Dendritic cell treated with granulocyte-macrophage colony-stimulating factor and Interleukin-4, amounts not matched to agents 40 ng/mL and 50 ng/mL, for 4 days (primary cell): ENCODE measurements at regions of chr11 and their contacts with region 1.

Region 1: DNA sequence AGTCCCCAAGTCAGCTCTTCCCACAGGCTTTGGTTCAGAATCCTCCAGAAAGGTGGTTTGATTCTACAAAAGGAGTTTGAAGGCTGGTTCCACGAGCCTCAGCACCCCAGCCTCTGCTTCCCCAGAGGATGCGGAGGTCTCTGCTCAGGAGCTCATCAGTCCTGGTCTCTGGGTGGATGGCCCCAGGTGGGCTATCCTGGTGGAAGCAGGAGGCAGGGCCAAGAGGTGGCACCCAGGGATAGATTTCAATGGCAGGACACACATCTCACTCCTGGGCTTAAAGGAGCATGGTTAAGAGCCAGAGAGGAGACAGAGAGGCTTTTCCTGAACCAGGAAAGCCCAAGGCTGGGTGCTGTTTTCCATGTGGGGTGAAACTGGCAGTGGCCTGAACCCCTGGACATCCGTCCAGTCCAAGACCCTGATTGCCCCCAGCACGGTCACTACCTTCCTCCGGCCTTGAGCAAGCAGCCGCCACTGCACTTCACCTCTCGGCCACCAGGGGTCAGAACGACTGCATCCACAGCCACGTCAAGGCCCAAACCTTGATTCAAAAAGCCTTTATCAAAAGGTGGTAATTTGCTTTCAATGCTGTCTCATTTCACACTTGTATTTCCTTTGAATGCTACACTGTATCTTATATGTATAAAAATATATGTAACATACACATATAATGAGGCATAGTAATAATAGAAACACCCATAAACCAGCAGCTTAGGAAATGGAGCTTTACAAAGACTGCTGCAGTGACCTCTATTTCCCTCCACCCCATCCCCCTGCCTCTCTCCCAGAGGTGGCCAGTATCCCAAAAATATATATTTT is 19.3 kb upstream of the FXYD2 start:
- H3K4me3 Mint-ChIP-seq: no peak overlapping the region
- H3K27ac Mint-ChIP-seq: peak overlapping the region; percentile 27
- H3K4me1 Mint-ChIP-seq: peaks cover 46% of the 10 kb centered on the region
- H3K27me3 Mint-ChIP-seq: no peaks in the 10 kb centered on the region

Region 2: GRCh38 chr11:117384041-117384440 is 459.8 kb before region 1 on chr11:
- intact Hi-C with region 1: no loop called
- H3K4me3 Mint-ChIP-seq: no peak overlapping the region
- H3K27ac Mint-ChIP-seq: no peak overlapping the region
- H3K4me1 Mint-ChIP-seq: no peaks in the 10 kb centered on the region
- H3K27me3 Mint-ChIP-seq: no peaks in the 10 kb centered on the region

Region 3: GRCh38 chr11:117885777-117886176 is 41.9 kb after region 1 on chr11:
- intact Hi-C with region 1: no loop called
- H3K4me3 Mint-ChIP-seq: no peak overlapping the region
- H3K27ac Mint-ChIP-seq: no peak overlapping the region
- H3K4me1 Mint-ChIP-seq: no peaks in the 10 kb centered on the region
- H3K27me3 Mint-ChIP-seq: peaks cover 18% of the 10 kb centered on the region

Region 4: DNA sequence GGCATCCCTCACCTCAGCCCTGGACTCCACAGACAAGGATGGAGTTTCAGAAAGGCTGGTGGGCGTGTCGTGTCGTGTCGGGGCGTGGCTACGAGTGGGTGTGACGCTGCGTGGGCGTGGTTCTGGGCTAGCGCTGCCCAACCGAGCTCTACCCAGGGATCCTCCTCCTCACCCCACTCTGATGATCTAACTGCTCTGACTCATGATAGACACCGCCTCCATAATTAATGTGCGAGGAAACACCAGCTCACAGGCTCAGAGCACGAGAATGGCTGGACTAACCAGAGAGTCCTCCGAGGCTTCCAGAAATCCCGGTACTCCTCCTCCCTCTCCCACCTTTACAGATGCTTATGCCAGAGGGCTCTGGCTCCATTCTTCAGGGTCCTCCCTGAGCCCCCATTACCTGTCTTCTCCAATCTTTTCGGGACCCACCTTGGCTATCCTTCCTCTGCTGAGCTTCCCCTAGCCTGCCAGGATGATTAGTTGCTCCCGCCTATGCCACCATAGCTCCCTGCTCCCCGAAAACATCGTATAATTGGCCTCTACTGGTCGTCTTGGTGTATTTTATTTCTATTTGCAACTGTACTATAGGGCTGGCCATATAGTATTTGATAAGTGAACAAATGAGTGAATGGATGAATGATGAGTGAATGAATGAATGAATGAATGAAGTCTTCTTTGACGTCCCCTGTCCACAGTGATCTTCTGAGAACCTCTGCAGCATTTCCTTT is 63.5 kb after region 1 on chr11:
- intact Hi-C with region 1: loop called (anchors 2 kb)
- H3K4me3 Mint-ChIP-seq: peak overlapping the region; percentile 69
- H3K27ac Mint-ChIP-seq: peak overlapping the region; percentile 88
- H3K4me1 Mint-ChIP-seq: peaks cover 42% of the 10 kb centered on the region
- H3K27me3 Mint-ChIP-seq: peaks cover 2% of the 10 kb centered on the region

Region 5: DNA sequence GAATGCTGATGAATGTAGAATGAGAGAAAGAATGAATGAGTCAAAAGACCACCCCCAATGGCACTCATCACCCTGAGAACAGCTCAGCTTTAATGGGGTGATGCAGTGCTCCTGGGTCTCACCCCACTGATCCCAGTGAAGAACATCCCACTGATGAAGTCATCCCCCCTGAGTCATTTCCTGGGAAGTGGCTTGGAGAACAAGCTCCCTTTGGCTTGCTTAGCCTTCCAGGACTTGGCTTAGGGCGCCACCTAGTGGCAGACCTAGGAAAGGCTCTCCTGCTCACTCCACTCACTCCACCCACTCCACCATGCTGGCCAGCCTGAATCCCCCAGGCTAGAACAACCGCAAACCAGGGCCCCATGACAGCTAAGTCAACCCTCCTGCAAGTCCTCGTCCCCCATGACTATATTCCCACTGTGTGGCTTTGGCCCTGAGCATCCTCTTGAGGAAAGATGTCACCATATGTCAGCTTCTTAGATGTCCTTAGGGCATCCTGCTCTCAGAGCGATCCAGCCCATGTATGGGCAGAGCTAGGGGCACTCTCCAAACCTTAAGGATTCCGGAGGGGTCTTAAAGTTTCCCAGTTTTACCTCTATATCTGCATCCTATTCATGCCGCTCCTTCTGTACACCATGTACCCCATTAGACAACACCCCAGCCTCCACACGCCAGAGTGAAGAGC is 103.1 kb after region 1 on chr11:
- intact Hi-C with region 1: loop called (anchors 1 kb)
- H3K4me3 Mint-ChIP-seq: no peak overlapping the region
- H3K27ac Mint-ChIP-seq: peak overlapping the region; percentile 62
- H3K4me1 Mint-ChIP-seq: peaks cover 83% of the 10 kb centered on the region
- H3K27me3 Mint-ChIP-seq: no peaks in the 10 kb centered on the region